Calu3 (cell line): ENCODE measurements at regions of chr2 and their contacts with region 1.

Region 1: DNA sequence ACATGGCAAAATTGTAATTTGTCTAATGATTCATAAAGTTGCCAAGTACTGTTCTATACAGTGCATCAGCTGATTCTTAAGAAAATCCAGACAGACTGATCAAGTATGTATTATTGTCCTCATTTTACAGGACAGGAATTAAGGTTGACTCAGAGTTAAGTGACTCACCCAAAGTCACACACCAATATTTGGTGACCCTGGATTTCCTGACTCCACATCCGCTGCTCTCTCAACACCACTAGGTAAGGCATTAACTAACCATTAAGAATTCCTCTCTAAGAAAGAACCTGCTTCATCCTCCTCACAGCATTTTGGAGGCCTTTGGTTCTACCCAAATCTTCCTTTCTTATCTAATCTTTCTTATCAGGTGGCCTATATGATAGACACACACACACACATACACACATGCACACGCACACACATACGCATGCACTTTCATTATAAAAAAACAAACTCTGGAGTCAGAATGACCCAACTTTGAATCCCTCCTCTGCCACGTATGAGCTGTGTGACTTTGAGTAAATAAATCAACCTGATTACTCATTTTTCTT is 150.8 kb downstream of the ANKRD44 start:
- DNase-seq: peak; percentile 52
- H3K4me3 Mint-ChIP-seq: peak overlapping the region; percentile 40
- H3K27ac Mint-ChIP-seq: peak overlapping the region; percentile 65
- H3K4me1 Mint-ChIP-seq: peaks cover 48% of the 10 kb centered on the region
- H3K27me3 Mint-ChIP-seq: no peaks in the 10 kb centered on the region
- CTCF ChIP-seq: no peak

Region 2: GRCh38 chr2:197137231-197137630 is 22.5 kb before region 1 on chr2:
- CTCF ChIA-PET with region 1: interaction called, 3 read pairs
- intact Hi-C with region 1: loop called (anchors 2 kb)
- DNase-seq: no peak
- H3K4me3 Mint-ChIP-seq: peak overlapping the region; percentile 8
- H3K27ac Mint-ChIP-seq: peak overlapping the region; percentile 62
- H3K4me1 Mint-ChIP-seq: peaks cover 25% of the 10 kb centered on the region
- H3K27me3 Mint-ChIP-seq: no peaks in the 10 kb centered on the region
- CTCF ChIP-seq: no peak